Calu3 (cell line): ENCODE measurements at regions of chr17 and their contacts with region 1.

Region 1: DNA sequence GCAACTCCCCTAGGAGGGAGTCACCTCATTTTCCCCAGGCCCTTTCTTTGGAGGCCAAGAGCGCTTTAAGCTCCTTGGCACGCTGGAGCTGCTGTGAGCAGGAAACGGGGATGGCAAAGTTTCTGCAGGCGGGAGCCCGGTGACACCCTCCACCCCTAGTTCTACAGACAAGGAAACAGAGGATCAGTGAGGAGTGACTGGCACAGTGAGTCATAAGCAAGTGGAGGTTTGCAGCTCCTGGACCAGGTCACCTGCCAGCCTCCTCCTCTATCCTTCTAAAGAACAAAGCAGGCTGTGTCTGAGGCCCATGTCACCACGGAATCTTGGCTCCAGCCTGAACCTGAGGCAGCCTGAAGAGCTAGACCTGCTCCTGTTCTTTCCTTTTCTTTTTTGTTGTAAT is 141.9 kb downstream of the TMEM132E start:
- DNase-seq: peak; percentile 89
- H3K4me3 Mint-ChIP-seq: peak overlapping the region; percentile 8
- H3K27ac Mint-ChIP-seq: peak overlapping the region; percentile 92
- H3K4me1 Mint-ChIP-seq: peaks cover 86% of the 10 kb centered on the region
- H3K27me3 Mint-ChIP-seq: no peaks in the 10 kb centered on the region
- CTCF ChIP-seq: no peak

Region 2: GRCh38 chr17:34584805-34585416 is 136.4 kb before region 1 on chr17:
- CTCF ChIA-PET with region 1: interaction called, 8 read pairs
- intact Hi-C with region 1: loop called (anchors 10 kb)
- DNase-seq: peak; percentile 41
- H3K4me3 Mint-ChIP-seq: no peak overlapping the region
- H3K27ac Mint-ChIP-seq: no peak overlapping the region
- H3K4me1 Mint-ChIP-seq: peaks cover 22% of the 10 kb centered on the region
- H3K27me3 Mint-ChIP-seq: peaks cover 84% of the 10 kb centered on the region
- CTCF ChIP-seq: peak; percentile 18

Region 3: DNA sequence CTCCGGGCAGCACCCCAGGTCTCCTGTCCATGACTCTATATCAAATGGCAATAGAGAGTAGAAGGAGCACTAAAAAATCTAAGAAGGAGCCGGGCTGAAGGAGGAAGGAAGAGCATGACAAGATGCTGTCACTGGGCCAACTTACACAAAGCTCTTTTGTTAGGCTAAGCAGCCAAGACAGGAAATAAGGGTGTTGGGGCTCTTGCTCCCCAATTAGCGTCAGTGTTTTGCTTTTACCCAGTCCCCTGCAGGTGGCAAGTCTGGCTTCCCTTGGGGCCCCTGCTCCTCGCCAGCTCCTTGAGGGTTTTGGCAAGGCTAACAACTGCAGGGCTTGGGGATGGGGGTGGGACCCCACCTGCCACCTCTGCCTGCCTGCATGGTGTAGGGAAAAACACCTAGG is 119.4 kb after region 1 on chr17:
- CTCF ChIA-PET with region 1: no interaction called
- intact Hi-C with region 1: loop called (anchors 5 kb)
- DNase-seq: peak; percentile 36
- H3K4me3 Mint-ChIP-seq: no peak overlapping the region
- H3K27ac Mint-ChIP-seq: no peak overlapping the region
- H3K4me1 Mint-ChIP-seq: peaks cover 11% of the 10 kb centered on the region
- H3K27me3 Mint-ChIP-seq: peaks cover 23% of the 10 kb centered on the region
- CTCF ChIP-seq: no peak